Astrocyte of the cerebellum (primary cell): ENCODE measurements at regions of chr11 and their contacts with region 1.

Region 1: GRCh38 chr11:44893846-44894617 is 56.7 kb downstream of the TP53I11 start:
- DNase-seq: peak; percentile 46
- H3K4me3 ChIP-seq: no peak overlapping the region
- CTCF ChIP-seq: peak; percentile 94

Region 2: GRCh38 chr11:44634401-44635281 is 259.4 kb before region 1 on chr11:
- in situ Hi-C with region 1: loop called (anchors 5 kb)
- DNase-seq: peak; percentile 19
- H3K4me3 ChIP-seq: no peak overlapping the region
- CTCF ChIP-seq: no peak

Region 3: DNA sequence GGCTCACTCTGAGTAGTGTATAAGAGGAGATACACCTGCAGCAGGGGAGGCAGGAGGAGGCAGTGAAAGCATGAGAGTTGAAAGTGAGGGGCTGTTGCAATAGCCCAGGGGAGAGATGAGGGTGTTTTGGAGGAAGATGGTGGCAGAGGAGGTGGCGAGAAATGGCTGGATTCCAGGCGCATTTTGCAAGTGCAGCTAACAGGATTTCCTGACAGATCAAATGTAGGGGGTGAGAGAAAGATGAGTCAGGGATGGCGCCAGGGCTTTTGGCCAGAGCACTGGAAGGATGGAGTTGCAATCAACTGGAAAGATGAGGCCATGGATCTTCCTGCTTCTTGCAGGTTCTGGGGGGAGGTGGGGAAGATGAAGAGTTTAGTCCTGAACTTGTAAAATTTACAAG is 184.1 kb before region 1 on chr11:
- in situ Hi-C with region 1: no loop called
- DNase-seq: no peak
- H3K4me3 ChIP-seq: no peak overlapping the region
- CTCF ChIP-seq: no peak

Region 4: GRCh38 chr11:44727373-44728287 is 166.4 kb before region 1 on chr11:
- in situ Hi-C with region 1: loop called (anchors 5 kb)
- DNase-seq: peak; percentile 19
- H3K4me3 ChIP-seq: peak overlapping the region; percentile 40
- CTCF ChIP-seq: peak; percentile 83

Region 5: DNA sequence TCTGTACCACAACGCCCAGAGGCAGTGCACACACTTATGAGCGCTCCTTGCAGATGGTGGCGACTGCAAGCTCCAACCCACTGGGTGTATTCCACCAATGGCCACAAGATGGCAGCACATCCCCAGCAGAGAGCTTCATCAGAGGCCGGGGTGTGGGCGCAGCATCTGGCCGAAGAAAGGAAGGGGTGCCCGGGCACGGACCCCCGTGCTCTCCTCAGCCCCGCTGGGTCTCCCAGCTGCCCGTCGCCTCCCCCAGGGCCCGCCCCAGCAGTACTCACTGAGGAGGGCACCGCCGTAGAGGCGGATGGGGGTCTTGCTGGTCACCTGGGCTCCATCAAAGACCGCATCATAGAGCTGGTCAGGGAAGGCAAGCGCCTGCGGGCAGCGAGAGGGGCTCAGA is 42.5 kb after region 1 on chr11:
- in situ Hi-C with region 1: no loop called
- DNase-seq: peak; percentile 64
- H3K4me3 ChIP-seq: no peak overlapping the region
- CTCF ChIP-seq: peak; percentile 89